ENCODE measurements at regions of chr4 and their contacts with region 1.

Region 1: DNA sequence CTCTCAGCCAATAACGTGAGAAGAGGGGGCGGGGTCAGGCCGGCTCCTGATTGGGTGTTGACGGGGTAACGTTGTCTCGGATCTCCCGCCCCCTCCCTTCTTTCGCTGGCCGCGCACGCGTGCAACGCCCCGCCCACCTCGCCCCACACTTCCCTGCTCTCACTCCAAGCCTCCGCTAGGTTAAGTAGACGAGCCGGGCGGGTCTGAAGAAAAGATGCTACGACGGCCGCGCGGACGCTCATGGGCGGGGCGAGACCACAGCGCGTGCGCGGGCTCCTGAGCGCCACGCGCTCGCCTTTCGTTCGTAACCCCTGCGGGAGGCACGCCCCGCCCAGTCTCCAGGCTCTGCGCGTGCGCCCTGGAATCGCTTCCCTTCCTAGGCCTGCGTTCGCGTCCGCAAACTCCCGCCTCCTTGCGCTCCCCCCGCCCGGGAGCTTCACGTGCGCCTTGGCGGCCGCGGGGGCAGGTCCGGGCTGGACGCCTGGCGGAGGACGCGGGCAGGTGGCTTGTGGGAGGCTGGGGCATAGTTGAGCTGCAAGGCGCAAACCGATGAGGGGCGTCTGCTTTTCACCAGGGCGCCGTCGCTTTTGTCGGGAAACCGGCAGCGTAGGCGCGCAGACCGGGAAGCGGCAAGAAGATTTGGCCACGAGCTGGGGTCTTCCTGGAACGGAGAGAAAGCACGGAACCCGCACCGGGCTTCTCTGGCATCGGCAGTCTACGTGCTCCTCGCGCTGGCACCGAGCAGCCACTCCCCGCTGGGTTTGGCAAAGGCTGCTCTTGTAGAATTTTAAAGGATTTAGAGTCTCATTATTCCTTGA is 467 bp upstream of the PGRMC2 start:
- DNase-seq: peak; percentile 100
- H3K4me3 Mint-ChIP-seq: peak overlapping the region; percentile 76
- H3K27ac Mint-ChIP-seq: peak overlapping the region; percentile 92
- H3K4me1 Mint-ChIP-seq: peaks cover 27% of the 10 kb centered on the region
- H3K27me3 Mint-ChIP-seq: no peaks in the 10 kb centered on the region

Region 2: DNA sequence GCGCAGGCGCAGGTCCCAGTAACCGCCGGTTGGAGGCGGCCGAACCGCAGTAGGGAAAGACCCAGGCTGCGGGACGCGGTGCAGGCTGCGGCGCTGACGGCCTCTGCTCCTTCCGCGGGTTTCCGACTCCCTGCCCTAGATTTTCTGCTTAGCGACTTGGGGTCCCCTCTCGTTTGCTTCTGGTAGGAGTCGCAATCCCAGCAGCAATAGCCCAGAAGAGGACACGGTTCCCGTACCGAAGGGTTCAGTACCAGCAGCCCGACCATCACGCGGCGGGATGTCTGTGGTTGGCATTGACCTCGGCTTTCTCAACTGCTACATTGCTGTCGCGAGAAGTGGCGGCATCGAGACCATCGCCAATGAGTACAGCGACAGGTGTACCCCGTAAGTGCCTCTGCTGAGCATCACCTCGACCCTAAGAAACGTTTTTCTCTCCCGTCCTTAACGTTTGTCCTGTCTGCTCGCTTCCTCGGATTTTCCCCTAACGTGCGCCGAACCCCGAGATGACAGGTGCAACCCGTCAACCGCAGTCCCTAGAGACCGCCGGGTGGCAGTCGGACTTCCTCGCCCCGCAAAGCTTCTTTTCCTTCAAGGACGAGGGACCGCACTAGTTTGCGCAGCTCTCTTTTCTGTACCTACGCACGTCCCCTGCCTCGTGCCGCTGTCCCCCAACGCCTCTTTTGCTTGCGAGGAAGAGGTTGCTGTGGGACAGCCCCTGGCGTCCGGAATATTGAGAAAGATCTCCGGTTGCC is 505.6 kb before region 1 on chr4 and contains the start of gene HSPA4L:
- CTCF ChIA-PET with region 1: no interaction called
- intact Hi-C with region 1: loop called (anchors 2 kb)
- DNase-seq: peak; percentile 78
- H3K4me3 Mint-ChIP-seq: peak within 1 kb of the TSS; percentile 86
- H3K27ac Mint-ChIP-seq: peak within 1 kb of the TSS; percentile 80
- H3K4me1 Mint-ChIP-seq: peaks cover 17% of the 10 kb centered on the region
- H3K27me3 Mint-ChIP-seq: peaks cover 56% of the 10 kb centered on the region
- total RNA-seq, gene HSPA4L: 2.6 to 2.8 TPM

Region 3: DNA sequence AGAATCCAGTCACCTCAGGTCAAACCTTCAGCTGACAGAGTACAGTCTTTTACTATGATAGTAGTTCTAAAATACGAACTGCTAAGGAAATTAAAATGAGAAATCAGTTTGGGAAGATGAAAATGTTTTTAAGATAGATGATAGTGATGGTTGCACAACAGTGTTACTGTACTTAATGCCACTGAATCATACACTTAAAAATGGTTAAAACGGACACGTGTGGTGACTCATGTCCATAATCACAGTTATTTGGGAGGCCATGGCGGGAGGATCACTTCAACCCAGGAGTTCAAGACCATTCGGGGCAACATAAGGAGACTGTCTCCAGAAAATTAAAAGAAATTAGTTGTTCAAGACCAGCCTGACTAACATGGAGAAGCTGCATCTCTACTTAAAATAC is 281.5 kb before region 1 on chr4:
- CTCF ChIA-PET with region 1: no interaction called
- intact Hi-C with region 1: no loop called
- DNase-seq: no peak
- H3K4me3 Mint-ChIP-seq: no peak overlapping the region
- H3K27ac Mint-ChIP-seq: no peak overlapping the region
- H3K4me1 Mint-ChIP-seq: no peaks in the 10 kb centered on the region
- H3K27me3 Mint-ChIP-seq: no peaks in the 10 kb centered on the region

Region 4: DNA sequence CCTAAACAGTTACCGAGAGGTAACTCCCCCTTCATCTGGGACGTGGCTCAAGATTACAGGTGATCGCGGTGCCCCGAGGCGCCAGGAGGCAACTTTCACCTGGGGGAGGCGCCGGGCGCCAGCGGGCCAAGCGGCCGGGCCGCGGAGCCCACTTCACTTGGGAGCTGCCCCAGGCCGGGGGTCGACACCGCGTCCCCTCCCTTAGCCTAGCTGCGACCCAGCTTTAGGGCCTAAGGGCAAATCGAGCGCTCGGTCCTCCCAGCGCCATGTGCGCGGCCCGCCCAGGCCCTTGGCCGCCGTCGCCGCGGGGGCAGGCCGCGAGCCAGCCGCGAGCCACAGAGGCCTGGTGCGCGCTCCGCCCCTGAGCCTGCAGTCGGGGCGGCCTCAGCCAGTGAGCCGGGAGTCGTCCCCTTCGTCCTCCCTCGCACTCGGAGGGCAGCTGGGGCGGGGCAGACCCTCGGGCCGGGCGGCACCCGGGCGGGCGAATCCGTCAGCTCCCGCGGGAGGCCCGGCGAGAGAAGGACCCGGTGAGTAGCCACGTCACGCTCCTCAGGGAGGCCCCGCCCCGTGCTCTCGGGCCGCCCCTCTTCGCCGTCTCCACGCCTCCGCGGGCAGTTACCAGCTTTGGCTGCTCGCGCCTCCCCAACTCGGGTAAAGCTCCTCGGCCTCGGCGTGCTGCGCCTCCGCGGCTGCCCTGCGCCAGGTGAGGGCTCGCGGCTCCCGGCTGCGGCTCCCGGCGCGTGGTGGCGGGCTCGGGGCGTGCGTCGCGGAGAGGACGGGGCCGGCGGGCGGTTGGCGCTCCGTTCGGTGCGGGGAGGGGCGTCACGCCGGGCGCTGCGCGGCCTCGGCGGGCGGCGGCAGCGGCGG is 227.1 kb before region 1 on chr4 and contains the start of gene LARP1B:
- CTCF ChIA-PET with region 1: no interaction called
- intact Hi-C with region 1: loop called (anchors 1 kb)
- DNase-seq: peak; percentile 94
- H3K4me3 Mint-ChIP-seq: peak within 1 kb of the TSS; percentile 82
- H3K27ac Mint-ChIP-seq: peak within 1 kb of the TSS; percentile 81
- H3K4me1 Mint-ChIP-seq: peaks cover 16% of the 10 kb centered on the region
- H3K27me3 Mint-ChIP-seq: no peaks in the 10 kb centered on the region
- total RNA-seq, gene LARP1B: 17.6 to 18.9 TPM

Region 5: DNA sequence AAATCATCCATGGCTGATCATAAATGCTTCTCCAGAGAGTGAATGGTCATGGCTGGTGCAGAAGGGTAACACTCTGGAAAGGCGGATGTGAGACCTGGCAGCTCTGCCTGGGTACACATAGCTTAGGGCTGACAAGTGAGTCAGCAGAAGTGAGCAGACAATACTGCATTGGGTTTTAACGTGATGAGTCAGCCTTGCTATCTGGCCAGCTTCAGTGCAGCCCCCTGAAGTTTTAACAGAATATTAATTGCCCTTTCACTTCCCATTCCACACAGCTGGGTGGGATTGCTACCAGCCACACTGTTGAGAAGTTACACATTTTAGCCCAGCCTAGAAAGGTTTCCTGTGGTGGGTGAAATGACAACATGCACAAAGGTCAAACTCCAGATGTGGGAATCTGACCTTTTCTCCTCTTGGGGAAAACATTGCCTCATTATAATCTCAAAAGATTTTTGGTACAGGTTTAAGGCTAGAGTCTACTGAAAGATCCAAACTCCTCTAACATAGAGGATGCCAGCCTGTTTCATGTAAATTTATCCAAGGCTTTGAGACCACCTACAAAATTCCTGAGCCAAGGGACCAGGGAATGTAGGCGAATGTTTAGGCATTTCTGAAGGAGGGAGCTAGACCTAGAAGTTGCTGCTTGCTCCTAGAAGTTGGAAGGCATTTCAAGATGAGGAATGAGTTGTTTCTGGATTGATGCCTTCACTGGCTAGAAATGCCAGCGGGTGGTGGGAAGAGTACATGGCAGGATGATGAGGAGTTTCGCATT is 229.8 kb after region 1 on chr4:
- CTCF ChIA-PET with region 1: no interaction called
- intact Hi-C with region 1: loop called (anchors 1 kb)
- DNase-seq: peak; percentile 8
- H3K4me3 Mint-ChIP-seq: no peak overlapping the region
- H3K27ac Mint-ChIP-seq: no peak overlapping the region
- H3K4me1 Mint-ChIP-seq: peaks cover 12% of the 10 kb centered on the region
- H3K27me3 Mint-ChIP-seq: peaks cover 2% of the 10 kb centered on the region

Region 6: DNA sequence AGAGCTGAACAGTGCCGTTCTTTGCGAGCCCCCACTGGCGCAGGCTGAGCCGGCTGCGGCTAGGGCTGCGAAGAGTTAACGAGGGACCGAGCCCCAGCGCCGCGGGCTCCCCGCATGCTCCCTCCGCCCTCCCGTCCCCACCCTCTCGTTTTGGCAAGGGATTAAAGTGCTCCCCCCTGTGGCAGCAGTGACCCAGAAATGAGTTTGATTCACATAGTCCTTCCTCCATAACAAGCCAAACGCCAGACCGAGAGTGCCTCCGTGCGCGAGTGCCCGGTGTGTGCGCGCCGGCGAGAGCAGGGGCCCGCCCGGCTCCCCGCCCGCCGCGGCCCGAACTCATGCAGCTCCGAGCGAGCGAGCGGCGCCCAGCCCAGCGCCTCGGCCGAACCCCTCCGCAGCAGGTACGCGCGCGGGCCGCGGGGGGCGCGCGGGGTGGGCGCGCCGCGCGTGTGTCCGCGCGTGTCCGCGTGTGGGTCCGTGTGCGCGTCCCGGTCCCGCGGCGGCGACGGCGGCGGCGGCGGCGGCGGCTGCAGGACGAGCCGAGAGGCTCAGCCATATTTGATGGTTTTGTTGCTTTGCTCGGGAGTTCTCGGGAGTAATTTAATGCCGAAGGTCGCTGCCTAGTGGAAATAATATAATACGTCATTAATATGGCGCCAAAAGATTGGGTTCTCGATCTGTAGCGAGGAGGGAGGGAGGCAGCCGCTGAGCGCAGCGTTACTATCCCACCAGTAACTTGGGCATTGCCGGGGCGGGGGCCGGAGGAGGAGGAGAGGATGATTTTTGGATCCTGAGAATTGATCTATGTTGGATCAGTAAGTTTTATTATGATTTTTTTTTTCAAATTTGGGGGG is 521.6 kb after region 1 on chr4 and contains the start of gene JADE1:
- CTCF ChIA-PET with region 1: interaction called, 3 read pairs
- intact Hi-C with region 1: loop called (anchors 1 kb)
- DNase-seq: peak; percentile 95
- H3K4me3 Mint-ChIP-seq: peak within 1 kb of the TSS; percentile 99
- H3K27ac Mint-ChIP-seq: peak within 1 kb of the TSS; percentile 100
- H3K4me1 Mint-ChIP-seq: peaks cover 15% of the 10 kb centered on the region
- H3K27me3 Mint-ChIP-seq: no peaks in the 10 kb centered on the region
- total RNA-seq, gene JADE1: 35.8 to 38.2 TPM